MCF 10A (cell line): ENCODE measurements at regions of chr15 and their contacts with region 1.

Region 1: DNA sequence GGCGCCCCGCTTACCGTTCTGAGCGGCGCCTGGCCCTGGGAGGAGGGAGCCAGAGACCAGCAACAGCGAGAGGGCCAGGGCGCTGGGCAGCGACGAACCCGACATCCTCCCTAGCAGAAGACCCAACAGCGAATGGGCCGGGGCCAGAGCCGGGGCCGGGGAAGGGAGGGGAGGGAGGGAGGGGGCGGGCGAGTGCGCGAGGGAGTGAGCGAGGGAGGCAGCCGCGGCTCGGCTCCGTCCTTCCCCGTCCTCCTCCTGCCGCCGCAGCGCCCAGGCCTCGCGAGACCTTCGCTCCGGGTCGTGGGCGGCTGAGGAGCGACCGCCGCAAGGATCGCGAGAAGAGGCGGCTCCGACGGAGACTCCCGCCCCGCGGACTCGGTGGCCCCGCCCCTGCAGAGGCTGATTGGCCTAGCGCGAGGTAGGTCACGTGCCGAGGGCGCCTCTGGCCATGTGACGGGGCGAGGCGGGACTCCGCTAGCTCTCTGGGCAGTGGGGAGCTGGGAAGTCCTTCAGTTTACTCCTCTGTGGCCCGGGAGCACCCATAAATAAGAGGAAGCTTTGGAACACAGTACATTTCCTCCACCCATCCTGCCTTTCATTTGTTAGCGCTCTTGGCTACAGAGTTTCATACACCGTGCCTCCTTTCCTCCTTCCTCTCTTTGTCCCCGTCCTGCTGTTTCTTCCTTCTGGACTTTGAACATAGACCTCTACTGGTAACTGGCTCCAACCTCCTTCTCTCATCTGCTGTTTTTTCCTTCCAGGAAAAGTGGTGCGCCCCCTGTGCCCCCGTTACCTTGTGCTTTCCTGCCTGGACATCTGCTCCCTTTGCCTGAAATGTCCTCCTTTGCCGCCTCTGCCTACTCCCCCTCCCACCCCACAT is at the start of gene NPTN:
- DNase-seq: peak; percentile 97
- H3K4me3 Mint-ChIP-seq: peak within 1 kb of the TSS; percentile 80
- H3K27ac Mint-ChIP-seq: peak within 1 kb of the TSS; percentile 97
- H3K4me1 Mint-ChIP-seq: peaks cover 57% of the 10 kb centered on the region
- H3K27me3 Mint-ChIP-seq: no peaks in the 10 kb centered on the region
- CTCF ChIP-seq: no peak
- total RNA-seq, gene NPTN: 71.0 and 78.9 TPM in 2 replicates

Region 2: GRCh38 chr15:72515591-72516389 is 1117.6 kb before region 1 on chr15:
- CTCF ChIA-PET with region 1: no interaction called
- POLR2A ChIA-PET with region 1: no interaction called
- intact Hi-C with region 1: loop called (anchors 5 kb)
- DNase-seq: peak; percentile 24
- H3K4me3 Mint-ChIP-seq: no peak overlapping the region
- H3K27ac Mint-ChIP-seq: peak overlapping the region; percentile 20
- H3K4me1 Mint-ChIP-seq: peaks cover 26% of the 10 kb centered on the region
- H3K27me3 Mint-ChIP-seq: no peaks in the 10 kb centered on the region
- CTCF ChIP-seq: no peak

Region 3: GRCh38 chr15:73504885-73505284 is 128.5 kb before region 1 on chr15:
- CTCF ChIA-PET with region 1: no interaction called
- POLR2A ChIA-PET with region 1: no interaction called
- intact Hi-C with region 1: no loop called
- DNase-seq: no peak
- H3K4me3 Mint-ChIP-seq: no peak overlapping the region
- H3K27ac Mint-ChIP-seq: no peak overlapping the region
- H3K4me1 Mint-ChIP-seq: no peaks in the 10 kb centered on the region
- H3K27me3 Mint-ChIP-seq: peaks cover 31% of the 10 kb centered on the region
- CTCF ChIP-seq: no peak

Region 4: DNA sequence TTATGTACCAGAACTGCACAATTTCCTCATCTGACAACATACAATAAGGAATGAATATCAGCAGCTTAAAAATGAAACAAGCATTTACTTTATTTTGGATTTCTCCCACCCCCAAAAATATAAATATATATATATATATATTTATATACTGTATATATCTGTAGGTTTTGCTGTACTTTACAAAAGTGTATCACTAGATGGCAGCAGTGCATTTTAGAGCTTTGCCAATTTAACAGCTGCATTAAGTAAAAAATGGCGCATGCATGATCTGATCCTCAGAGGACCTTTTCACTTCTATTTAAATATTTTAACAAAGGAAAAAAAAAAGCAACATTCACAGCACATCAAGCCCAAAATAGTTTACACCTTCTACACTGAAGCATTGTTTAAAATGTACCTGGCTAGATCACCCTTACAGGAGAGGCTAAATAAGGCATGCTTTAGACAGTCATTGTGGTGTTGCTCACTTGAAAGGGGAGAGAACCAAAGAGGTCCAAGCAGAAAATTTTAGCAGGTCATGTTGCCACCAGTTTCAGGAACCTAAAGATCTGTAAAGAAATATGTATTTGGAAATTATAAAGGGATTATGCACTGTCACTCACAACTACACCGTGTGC is 72.7 kb before region 1 on chr15:
- CTCF ChIA-PET with region 1: interaction called, 94 read pairs
- POLR2A ChIA-PET with region 1: interaction called, 102 read pairs
- intact Hi-C with region 1: loop called (anchors 1 kb)
- DNase-seq: peak; percentile 72
- H3K4me3 Mint-ChIP-seq: no peak overlapping the region
- H3K27ac Mint-ChIP-seq: no peak overlapping the region
- H3K4me1 Mint-ChIP-seq: peaks cover 7% of the 10 kb centered on the region
- H3K27me3 Mint-ChIP-seq: no peaks in the 10 kb centered on the region
- CTCF ChIP-seq: peak; percentile 51

Region 5: DNA sequence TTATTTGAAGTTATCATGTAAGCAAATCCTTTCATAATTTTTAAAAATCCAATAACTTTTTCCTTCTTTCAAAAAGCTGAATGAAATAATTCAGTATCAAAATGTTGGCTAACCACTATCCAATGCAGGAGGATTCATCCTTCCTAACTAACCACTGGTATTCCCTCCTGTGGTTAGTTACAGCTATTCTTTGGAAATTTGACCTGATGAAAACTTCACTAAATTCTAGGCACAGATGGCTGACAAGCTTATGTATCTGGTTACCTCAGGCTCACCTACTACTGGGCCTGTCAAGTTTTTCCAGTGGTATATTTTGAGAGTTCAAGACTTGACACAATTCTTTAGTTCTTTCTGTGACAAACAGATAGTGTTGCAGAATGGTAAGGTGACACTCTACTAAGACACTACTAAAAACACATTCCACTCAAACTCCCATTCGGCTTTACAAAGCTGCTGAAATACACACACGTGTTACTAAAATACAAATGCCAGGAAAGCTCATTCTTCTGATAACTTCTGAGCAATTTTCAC is 16.0 kb before region 1 on chr15:
- CTCF ChIA-PET with region 1: interaction called, 15 read pairs
- POLR2A ChIA-PET with region 1: interaction called, 128 read pairs
- intact Hi-C with region 1: no loop called
- DNase-seq: no peak
- H3K4me3 Mint-ChIP-seq: no peak overlapping the region
- H3K27ac Mint-ChIP-seq: no peak overlapping the region
- H3K4me1 Mint-ChIP-seq: peaks cover 20% of the 10 kb centered on the region
- H3K27me3 Mint-ChIP-seq: no peaks in the 10 kb centered on the region
- CTCF ChIP-seq: no peak

Region 6: GRCh38 chr15:73683777-73684580 is 50.6 kb after region 1 on chr15 and contains the start of gene CD276:
- CTCF ChIA-PET with region 1: interaction called, 57 read pairs
- POLR2A ChIA-PET with region 1: interaction called, 91 read pairs
- intact Hi-C with region 1: no loop called
- DNase-seq: peak; percentile 64
- H3K4me3 Mint-ChIP-seq: peak within 1 kb of the TSS; percentile 82
- H3K27ac Mint-ChIP-seq: peak within 1 kb of the TSS; percentile 69
- H3K4me1 Mint-ChIP-seq: peaks cover 41% of the 10 kb centered on the region
- H3K27me3 Mint-ChIP-seq: no peaks in the 10 kb centered on the region
- CTCF ChIP-seq: no peak
- total RNA-seq, gene CD276: 52.8 and 57.7 TPM in 2 replicates

Region 7: GRCh38 chr15:73704869-73705645 is 71.7 kb after region 1 on chr15:
- CTCF ChIA-PET with region 1: interaction called, 308 read pairs
- POLR2A ChIA-PET with region 1: interaction called, 73 read pairs
- intact Hi-C with region 1: loop called (anchors 1 kb)
- DNase-seq: peak; percentile 66
- H3K4me3 Mint-ChIP-seq: no peak overlapping the region
- H3K27ac Mint-ChIP-seq: peak overlapping the region; percentile 29
- H3K4me1 Mint-ChIP-seq: peaks cover 5% of the 10 kb centered on the region
- H3K27me3 Mint-ChIP-seq: no peaks in the 10 kb centered on the region
- CTCF ChIP-seq: peak; percentile 69